Endothelial cell of umbilical vein (primary cell): ENCODE measurements at regions of chrX and their contacts with region 1.

Region 1: DNA sequence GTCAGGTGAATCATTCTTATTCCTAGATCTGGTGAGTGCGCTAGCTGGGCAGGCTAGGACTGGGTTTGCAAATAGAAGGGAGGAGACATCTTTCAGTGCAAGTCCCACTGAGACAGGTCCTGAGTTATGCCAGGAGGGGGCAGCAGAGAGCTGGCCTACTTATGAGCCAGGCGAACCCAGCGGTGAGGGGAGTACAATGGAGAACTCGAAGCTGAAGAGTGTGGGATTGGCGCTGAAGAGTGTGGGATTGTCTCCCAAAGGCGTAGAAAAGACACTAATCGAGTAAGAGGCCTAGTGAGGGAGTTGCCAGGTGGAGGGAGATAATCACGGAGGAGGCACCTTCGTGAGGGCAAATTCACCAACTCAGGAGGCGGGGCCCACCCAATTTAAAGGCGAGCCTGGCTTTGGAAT is 91.7 kb upstream of the CXorf66 start:
- DNase-seq: peak; percentile 28
- H3K4me3 ChIP-seq: no peak overlapping the region
- H3K27ac ChIP-seq: no peak overlapping the region
- H3K4me1 ChIP-seq: no peaks in the 10 kb centered on the region
- H3K27me3 ChIP-seq: no peaks in the 10 kb centered on the region
- CTCF ChIP-seq: peak; percentile 55 to 79
- POLR2A ChIP-seq: no peak

Region 2: GRCh38 chrX:140022482-140022881 is 34.5 kb before region 1 on chrX:
- CTCF ChIA-PET with region 1: no interaction called
- POLR2A ChIA-PET with region 1: no interaction called
- dilution Hi-C with region 1: no loop called
- intact Hi-C with region 1: no loop called
- DNase-seq: no peak
- H3K4me3 ChIP-seq: no peak overlapping the region
- H3K27ac ChIP-seq: no peak overlapping the region
- H3K4me1 ChIP-seq: no peaks in the 10 kb centered on the region
- H3K27me3 ChIP-seq: no peaks in the 10 kb centered on the region
- CTCF ChIP-seq: no peak
- POLR2A ChIP-seq: no peak

Region 3: DNA sequence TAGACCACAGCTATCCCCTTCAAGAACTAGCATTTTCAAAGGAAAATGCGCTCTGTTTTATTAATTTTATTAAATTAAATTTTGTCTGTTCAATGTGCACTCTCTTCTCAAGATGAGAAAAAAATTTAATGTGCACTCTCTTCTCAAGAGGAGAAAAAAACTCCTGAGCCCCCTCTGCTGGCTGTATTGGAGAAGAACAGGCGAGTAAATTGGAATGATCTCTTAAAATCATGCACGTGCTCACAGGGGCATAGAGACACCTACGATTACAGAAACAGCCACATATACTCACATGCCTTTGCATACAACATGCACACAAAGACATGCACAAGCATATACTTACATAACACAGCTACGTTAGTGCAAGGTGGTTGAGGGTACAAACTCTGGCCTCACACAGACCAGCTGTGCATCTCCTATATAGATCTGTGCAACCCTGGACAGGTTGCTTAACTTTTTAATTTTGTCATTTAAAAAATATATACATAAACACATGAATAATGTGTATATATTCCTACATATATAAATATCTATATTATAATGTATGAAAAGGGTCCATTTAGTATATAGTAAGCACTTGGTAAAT is 84.5 kb after region 1 on chrX:
- CTCF ChIA-PET with region 1: interaction called, 5 read pairs
- POLR2A ChIA-PET with region 1: no interaction called
- dilution Hi-C with region 1: no loop called
- intact Hi-C with region 1: loop called (anchors 1 kb)
- DNase-seq: peak; percentile 1
- H3K4me3 ChIP-seq: no peak overlapping the region
- H3K27ac ChIP-seq: no peak overlapping the region
- H3K4me1 ChIP-seq: no peaks in the 10 kb centered on the region
- H3K27me3 ChIP-seq: no peaks in the 10 kb centered on the region
- CTCF ChIP-seq: peak in 1 of 2 donors; percentile 35
- POLR2A ChIP-seq: no peak

Region 4: GRCh38 chrX:140503714-140504351 is 446.8 kb after region 1 on chrX:
- CTCF ChIA-PET with region 1: no interaction called
- POLR2A ChIA-PET with region 1: no interaction called
- dilution Hi-C with region 1: no loop called
- intact Hi-C with region 1: loop called (anchors 10 kb)
- DNase-seq: peak; percentile 8
- H3K4me3 ChIP-seq: peak overlapping the region in 1 of 3 experiments; percentile 20
- H3K27ac ChIP-seq: no peak overlapping the region
- H3K4me1 ChIP-seq: no peaks in the 10 kb centered on the region
- H3K27me3 ChIP-seq: peaks cover 46 to 59% of the 10 kb centered on the region in 2 experiments
- CTCF ChIP-seq: no peak
- POLR2A ChIP-seq: no peak

Region 5: DNA sequence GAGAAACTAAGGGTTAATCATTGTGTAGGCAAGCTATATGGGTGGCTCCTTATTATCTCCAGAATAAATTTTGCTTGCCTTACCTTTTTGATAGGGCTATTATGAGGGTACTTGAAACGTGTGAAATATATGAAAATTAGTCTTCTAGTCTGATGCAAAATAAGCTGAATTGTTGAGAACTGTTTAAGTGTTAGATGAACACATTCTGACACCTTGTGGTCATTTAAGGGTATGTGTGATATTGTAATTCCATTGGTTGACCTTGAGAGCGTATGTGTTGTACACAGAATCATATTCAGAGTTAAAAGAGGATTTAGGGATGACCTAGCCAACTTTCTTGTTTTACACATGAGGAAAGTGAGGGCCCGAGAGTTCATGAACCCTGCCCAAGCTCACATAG is 607.9 kb after region 1 on chrX:
- CTCF ChIA-PET with region 1: no interaction called
- POLR2A ChIA-PET with region 1: no interaction called
- dilution Hi-C with region 1: no loop called
- intact Hi-C with region 1: loop called (anchors 5 kb)
- DNase-seq: no peak
- H3K4me3 ChIP-seq: no peak overlapping the region
- H3K27ac ChIP-seq: no peak overlapping the region
- H3K4me1 ChIP-seq: no peaks in the 10 kb centered on the region
- H3K27me3 ChIP-seq: no peaks in the 10 kb centered on the region
- CTCF ChIP-seq: no peak
- POLR2A ChIP-seq: no peak